Lower leg skin (tissue), 4 donors: ENCODE measurements at regions of chr1 and their contacts with region 1.

Region 1: DNA sequence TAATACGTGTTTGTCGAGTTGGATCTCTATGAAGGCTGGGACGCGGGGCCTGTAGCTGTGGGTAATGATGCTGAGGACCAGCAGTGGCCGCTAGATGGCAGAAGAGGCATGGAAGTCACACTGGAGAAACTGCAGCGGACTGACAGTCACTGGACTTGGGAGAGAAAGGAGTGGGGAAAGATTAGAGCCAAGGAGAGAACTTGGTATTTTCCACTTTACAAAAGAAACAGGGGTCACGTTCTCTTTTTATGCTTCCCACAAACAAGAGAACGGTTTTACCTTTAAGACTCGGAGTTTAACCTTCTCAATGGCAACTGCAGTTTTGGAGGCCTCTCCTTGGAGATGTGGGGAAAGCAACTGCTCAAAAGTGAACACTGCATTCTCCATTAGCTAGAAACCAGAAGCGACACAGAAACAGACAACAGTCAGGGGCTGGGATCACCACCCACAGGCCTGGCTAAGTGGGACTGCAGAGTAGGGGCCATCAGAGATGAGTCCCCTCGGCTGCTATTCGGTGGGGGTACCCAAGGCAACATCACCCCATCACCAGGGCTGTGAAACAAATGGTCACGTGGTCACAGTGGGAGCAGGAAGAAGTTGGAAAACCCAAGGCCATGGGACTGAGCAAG is 51.1 kb upstream of the EDEM3 start:
- DNase-seq: peak; percentile 90 to 98
- H3K4me3 ChIP-seq: no peak overlapping the region
- CTCF ChIP-seq: peak in 1 of 3 donors; percentile 71
- POLR2A ChIP-seq: no peak

Region 2: DNA sequence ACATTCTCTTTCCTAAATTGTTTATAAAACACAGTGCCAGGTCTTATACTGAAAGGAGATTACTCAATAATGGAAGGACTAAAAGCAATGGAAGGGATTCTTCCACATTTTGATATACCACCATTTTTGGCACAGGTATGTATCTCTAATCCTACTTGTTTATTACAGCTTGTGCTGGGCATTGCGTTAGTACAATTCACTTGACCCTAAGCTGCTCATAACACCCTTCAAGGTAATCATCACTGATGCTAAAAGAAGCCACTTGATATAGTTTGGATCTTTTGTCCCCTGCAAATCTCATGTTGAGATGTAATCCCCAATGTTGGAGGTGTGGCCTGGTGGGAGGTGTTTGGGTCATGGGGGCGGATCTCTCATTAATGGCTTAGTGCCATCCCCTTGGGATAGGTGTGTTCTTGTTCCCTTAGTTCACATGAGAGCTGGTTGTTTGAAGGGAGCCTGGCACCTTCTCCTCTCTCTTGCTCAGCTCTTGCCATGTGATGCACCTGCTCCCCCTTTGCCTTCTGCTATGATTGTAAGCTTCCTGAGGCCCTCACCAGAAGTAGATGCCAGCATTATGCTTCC is 97.4 kb after region 1 on chr1:
- intact Hi-C with region 1: no loop called
- DNase-seq: no peak
- H3K4me3 ChIP-seq: no peak overlapping the region
- CTCF ChIP-seq: no peak
- POLR2A ChIP-seq: no peak

Region 3: DNA sequence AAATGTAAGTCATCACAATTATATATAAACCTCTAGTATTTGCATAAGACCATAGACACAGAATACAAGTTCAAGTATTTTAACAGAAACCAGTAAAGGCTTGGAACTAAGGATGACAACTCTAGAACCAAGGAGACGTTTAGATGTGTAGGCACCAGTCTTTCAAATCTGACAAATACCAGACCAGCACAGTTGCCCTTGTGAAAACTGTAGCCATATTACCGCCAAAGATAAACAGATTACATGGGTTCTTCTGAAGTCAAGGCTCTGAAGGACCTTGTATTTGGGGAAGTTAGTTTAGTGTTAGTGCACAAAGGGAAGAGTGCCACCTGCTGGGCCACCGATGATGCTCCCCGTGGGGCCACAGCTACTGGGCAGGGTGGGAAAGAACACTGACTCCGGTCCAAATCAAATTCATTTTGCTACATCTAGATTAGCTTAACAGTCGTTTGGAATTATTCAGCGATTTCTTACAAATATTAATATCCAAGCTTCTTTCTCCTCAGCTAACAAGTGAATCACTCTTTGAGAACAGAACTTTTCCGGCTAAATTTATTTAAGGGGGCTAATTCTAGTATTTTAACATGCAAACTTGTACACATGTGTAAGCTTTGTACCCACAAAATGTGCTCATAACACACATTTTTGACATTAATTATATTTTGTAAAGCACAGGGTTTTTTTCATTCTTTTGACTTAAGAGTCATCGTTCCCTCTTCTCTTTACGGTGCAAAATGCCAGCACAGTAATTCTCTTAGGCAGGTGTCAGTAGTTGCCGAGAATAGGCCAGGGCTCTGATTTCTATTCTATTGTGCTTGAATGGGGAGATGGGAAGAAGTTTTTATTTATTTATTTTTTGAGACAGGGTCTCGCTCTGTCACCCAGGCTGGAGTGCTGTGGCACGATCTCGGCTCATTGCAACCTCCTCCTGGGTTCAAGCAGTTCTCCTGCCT is 176.5 kb after region 1 on chr1:
- intact Hi-C with region 1: loop called (anchors 2 kb)
- DNase-seq: peak; percentile 65 to 94
- H3K4me3 ChIP-seq: no peak overlapping the region
- CTCF ChIP-seq: peak in 1 of 3 donors; percentile 84
- POLR2A ChIP-seq: no peak

Region 4: GRCh38 chr1:185062710-185063370 is 257.1 kb after region 1 on chr1:
- intact Hi-C with region 1: no loop called
- DNase-seq: no peak
- H3K4me3 ChIP-seq: no peak overlapping the region
- CTCF ChIP-seq: no peak
- POLR2A ChIP-seq: no peak

Region 5: GRCh38 chr1:185170291-185170848 is 364.6 kb after region 1 on chr1:
- intact Hi-C with region 1: loop called (anchors 10 kb)
- DNase-seq: peak in 1 of 2 donors; percentile 21
- H3K4me3 ChIP-seq: no peak overlapping the region
- CTCF ChIP-seq: no peak
- POLR2A ChIP-seq: no peak

Region 6: GRCh38 chr1:186615332-186615731 is 1809.6 kb after region 1 on chr1:
- intact Hi-C with region 1: no loop called
- DNase-seq: no peak
- H3K4me3 ChIP-seq: no peak overlapping the region
- CTCF ChIP-seq: no peak
- POLR2A ChIP-seq: no peak